PC-3 (cell line): ENCODE measurements at regions of chr1 and their contacts with region 1.

Region 1: GRCh38 chr1:31705080-31705866 is 1.5 kb upstream of the COL16A1 start:
- DNase-seq: peak; percentile 49
- ATAC-seq: peak; percentile 10; the same call in 1 of the 2 replicates
- H3K4me3 ChIP-seq: no peak overlapping the region
- H3K27ac ChIP-seq: no peak overlapping the region
- H3K4me1 ChIP-seq: peaks cover 40% of the 10 kb centered on the region
- H3K27me3 ChIP-seq: no peaks in the 10 kb centered on the region
- CTCF ChIP-seq: peak; percentile 40; the same call in 1 of the 2 replicates

Region 2: GRCh38 chr1:31639543-31639942 is 65.7 kb before region 1 on chr1:
- CTCF ChIA-PET with region 1: no interaction called
- POLR2A ChIA-PET with region 1: no interaction called
- intact Hi-C with region 1: no loop called
- DNase-seq: no peak
- ATAC-seq: no peak
- H3K4me3 ChIP-seq: no peak overlapping the region
- H3K27ac ChIP-seq: no peak overlapping the region
- H3K4me1 ChIP-seq: peaks cover 8% of the 10 kb centered on the region
- H3K27me3 ChIP-seq: no peaks in the 10 kb centered on the region
- CTCF ChIP-seq: no peak

Region 3: GRCh38 chr1:31663622-31664452 is 41.4 kb before region 1 on chr1:
- CTCF ChIA-PET with region 1: interaction called, 11 read pairs
- POLR2A ChIA-PET with region 1: no interaction called
- intact Hi-C with region 1: no loop called
- DNase-seq: peak; percentile 72
- ATAC-seq: peak; percentile 50
- H3K4me3 ChIP-seq: no peak overlapping the region
- H3K27ac ChIP-seq: no peak overlapping the region
- H3K4me1 ChIP-seq: peaks cover 14% of the 10 kb centered on the region
- H3K27me3 ChIP-seq: no peaks in the 10 kb centered on the region
- CTCF ChIP-seq: peak; percentile 93

Region 4: GRCh38 chr1:31725777-31726535 is 20.7 kb after region 1 on chr1:
- CTCF ChIA-PET with region 1: no interaction called
- POLR2A ChIA-PET with region 1: no interaction called
- intact Hi-C with region 1: no loop called
- DNase-seq: no peak
- ATAC-seq: no peak
- H3K4me3 ChIP-seq: no peak overlapping the region
- H3K27ac ChIP-seq: no peak overlapping the region
- H3K4me1 ChIP-seq: no peaks in the 10 kb centered on the region
- H3K27me3 ChIP-seq: no peaks in the 10 kb centered on the region
- CTCF ChIP-seq: no peak

Region 5: GRCh38 chr1:32205401-32206370 is 500.4 kb after region 1 on chr1 and contains the start of gene IQCC:
- CTCF ChIA-PET with region 1: no interaction called
- POLR2A ChIA-PET with region 1: no interaction called
- intact Hi-C with region 1: no loop called
- DNase-seq: peak; percentile 91
- ATAC-seq: peak; percentile 79
- H3K4me3 ChIP-seq: peak within 1 kb of the TSS; percentile 83
- H3K27ac ChIP-seq: peak within 1 kb of the TSS; percentile 27; the same call in 1 of the 2 replicates
- H3K4me1 ChIP-seq: peaks cover 27% of the 10 kb centered on the region
- H3K27me3 ChIP-seq: no peaks in the 10 kb centered on the region
- CTCF ChIP-seq: no peak
- total RNA-seq, gene IQCC: 8.5 and 11.8 TPM in 2 replicates